ENCODE measurements at regions of chr17 and their contacts with region 1.

Region 1: GRCh38 chr17:3582915-3583314 is 25.3 kb upstream of the TRPV3 start:
- DNase-seq: no peak
- H3K4me3 ChIP-seq: no peak overlapping the region
- H3K27ac ChIP-seq: no peak overlapping the region
- H3K27me3 ChIP-seq: no peaks in the 10 kb centered on the region
- CTCF ChIP-seq: no peak

Region 2: GRCh38 chr17:3626831-3627768 is 44.2 kb after region 1 on chr17:
- intact Hi-C with region 1: loop called in 1 of 2 experiments (anchors 5 kb)
- DNase-seq: no peak
- H3K4me3 ChIP-seq: no peak overlapping the region
- H3K27ac ChIP-seq: peak overlapping the region in 2 of 59 donors; percentile 15 to 59
- H3K27me3 ChIP-seq: no peaks in the 10 kb centered on the region
- CTCF ChIP-seq: no peak

Region 3: DNA sequence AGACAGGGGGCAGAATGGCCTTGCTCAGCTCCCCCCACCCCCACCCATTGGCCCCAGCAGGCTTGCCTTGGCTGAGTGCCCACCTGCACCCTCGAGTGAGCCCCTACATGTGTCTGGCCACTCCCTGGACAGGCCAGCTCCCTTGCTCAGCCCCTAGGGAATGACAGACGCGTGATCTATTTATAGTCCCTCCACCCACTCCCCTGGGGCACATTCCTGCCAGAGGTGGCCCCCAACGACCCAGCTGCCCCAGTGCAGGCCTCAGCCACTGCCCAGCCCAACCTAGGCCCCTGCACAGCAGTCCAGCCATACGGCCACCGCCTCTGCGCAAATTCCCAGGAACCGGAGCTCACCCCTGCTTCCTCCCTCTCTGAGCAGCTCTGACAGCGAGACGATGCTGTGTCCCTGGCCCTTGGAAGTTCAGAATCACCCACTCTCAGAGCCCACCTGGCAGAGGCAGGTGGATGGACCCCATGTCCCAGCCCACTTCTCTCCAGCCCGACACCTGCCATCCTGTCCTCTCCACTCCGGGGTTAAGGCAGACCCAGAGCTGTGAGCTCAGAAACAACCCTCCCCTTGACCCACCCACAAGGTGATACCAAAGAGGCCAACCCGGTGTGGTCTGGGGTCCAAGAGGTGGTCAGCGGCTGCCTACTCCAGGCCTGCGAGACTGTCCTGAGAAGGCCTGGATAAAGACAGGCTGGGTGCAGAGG is 344.9 kb after region 1 on chr17:
- intact Hi-C with region 1: no loop called
- DNase-seq: no peak
- H3K4me3 ChIP-seq: no peak overlapping the region
- H3K27ac ChIP-seq: no peak overlapping the region
- H3K27me3 ChIP-seq: no peaks in the 10 kb centered on the region
- CTCF ChIP-seq: no peak